ENCODE measurements at regions of chrX and their contacts with region 1.

Region 1: GRCh38 chrX:130268500-130269170 is at the start of gene ZNF280C:
- DNase-seq: peak; percentile 76 to 94 (median 88)
- ATAC-seq: peak; percentile 94
- H3K4me3 ChIP-seq: peak within 1 kb of the TSS; percentile 73 to 74
- H3K4me3 Mint-ChIP-seq: peak within 1 kb of the TSS; percentile 88
- H3K27ac ChIP-seq: peak within 1 kb of the TSS; percentile 54 to 65
- H3K27ac Mint-ChIP-seq: peak within 1 kb of the TSS; percentile 85
- H3K4me1 ChIP-seq: peaks cover 14% of the 10 kb centered on the region
- H3K4me1 Mint-ChIP-seq: peaks cover 13% of the 10 kb centered on the region
- H3K27me3 ChIP-seq: no peaks in the 10 kb centered on the region
- H3K27me3 Mint-ChIP-seq: no peaks in the 10 kb centered on the region
- CTCF ChIP-seq: no peak
- total RNA-seq, gene ZNF280C: 4.4 to 5.2 TPM

Region 2: DNA sequence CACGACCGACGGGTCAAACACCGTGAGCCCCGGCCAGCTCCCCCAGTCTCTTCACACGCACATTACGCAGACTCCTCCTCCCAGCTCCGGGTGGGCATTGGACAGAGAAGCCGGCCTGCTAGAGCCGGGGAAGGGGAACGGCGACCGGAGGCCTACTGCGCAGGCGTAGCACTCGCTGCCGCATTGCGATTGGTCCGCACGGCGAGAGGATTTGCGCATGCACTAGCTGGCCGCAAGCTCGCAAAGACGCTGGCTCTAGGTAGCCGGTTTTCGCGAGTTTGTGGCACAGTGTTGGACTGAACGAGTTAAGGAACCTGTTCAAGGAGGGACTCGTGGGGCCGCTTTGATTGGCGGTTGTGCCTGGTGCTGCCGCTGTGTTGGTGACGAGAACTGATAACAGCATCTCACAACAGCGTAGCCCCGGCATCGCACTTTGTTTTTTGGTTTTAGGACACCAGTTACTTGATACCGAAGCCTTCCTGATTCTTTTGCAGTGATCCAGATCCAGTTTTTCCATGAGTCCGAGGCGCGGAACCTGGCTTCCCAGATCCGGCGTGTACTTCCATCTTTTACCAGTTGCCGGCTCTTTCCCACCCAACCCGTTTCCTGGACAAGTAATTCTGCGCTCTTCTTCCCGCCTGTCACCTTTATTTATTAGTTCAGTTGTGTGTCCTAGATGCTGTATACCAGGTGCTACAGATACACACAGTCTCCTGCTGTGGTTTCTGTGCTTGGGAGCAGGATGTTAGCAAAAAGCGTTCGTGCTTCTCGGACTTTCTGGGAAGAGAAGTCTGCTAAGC is 102.7 kb before region 1 on chrX and contains the start of gene AIFM1:
- CTCF ChIA-PET with region 1: no interaction called
- POLR2A ChIA-PET with region 1: no interaction called
- intact Hi-C with region 1: loop called (anchors 1 to 5 kb)
- DNase-seq: peak; percentile 68 to 95 (median 85)
- ATAC-seq: peak; percentile 87
- H3K4me3 ChIP-seq: peak within 1 kb of the TSS; percentile 57 to 74
- H3K4me3 Mint-ChIP-seq: peak within 1 kb of the TSS; percentile 90
- H3K27ac ChIP-seq: peak within 1 kb of the TSS; percentile 54 to 80
- H3K27ac Mint-ChIP-seq: peak within 1 kb of the TSS; percentile 90
- H3K4me1 ChIP-seq: peaks cover 17% of the 10 kb centered on the region
- H3K4me1 Mint-ChIP-seq: peaks cover 42% of the 10 kb centered on the region
- H3K27me3 ChIP-seq: no peaks in the 10 kb centered on the region
- H3K27me3 Mint-ChIP-seq: no peaks in the 10 kb centered on the region
- CTCF ChIP-seq: no peak
- total RNA-seq, gene AIFM1: 4.4 to 4.9 TPM

Region 3: DNA sequence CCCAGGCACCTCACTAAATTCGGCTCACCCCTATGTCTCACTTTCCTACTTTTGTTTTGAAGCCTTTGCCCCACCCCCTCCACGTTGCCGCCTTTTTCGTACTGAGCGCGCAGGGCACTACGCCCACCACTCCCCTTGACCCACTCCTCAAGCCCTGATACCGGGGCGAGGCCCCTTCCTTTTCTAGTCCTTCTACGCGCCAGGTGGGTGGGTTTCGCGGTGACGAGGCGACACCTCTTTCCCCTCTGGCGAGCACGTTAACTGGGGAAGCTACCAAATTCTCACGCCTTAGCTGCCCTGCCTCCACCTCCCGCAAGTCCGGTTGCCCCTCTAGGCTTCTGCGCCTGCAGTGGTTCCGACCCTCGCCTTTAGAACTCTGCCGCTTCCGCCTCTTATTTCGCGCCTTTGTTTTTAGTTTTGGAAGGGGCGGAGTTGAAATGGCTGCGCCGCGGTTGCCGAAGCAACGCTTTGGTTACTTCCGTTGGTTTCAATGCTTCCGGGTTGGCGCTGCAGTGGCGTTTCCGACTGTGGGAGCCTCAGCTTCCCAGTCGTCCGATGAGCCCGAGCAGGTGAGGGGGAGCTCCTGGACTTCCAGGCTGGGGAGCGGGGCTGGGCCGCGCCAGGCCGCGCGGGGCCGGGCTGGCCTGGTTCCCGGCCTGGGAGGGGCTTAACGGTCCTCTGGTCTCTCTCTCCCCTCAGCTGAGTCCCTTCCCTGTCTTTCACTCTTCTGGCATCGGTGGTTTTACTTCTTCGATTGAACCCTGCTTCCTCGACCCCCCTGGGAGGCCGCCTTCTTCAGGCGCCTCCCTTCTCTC is 71.0 kb after region 1 on chrX and contains the start of gene SLC25A14:
- CTCF ChIA-PET with region 1: no interaction called
- POLR2A ChIA-PET with region 1: interaction called, 5 read pairs
- intact Hi-C with region 1: loop called (anchors 2 kb)
- DNase-seq: peak; percentile 32 to 86 (median 71)
- ATAC-seq: peak; percentile 88
- H3K4me3 ChIP-seq: peak within 1 kb of the TSS; percentile 60 to 83
- H3K4me3 Mint-ChIP-seq: peak within 1 kb of the TSS; percentile 95
- H3K27ac ChIP-seq: peak within 1 kb of the TSS; percentile 36 to 83
- H3K27ac Mint-ChIP-seq: peak within 1 kb of the TSS; percentile 83
- H3K4me1 ChIP-seq: no peaks in the 10 kb centered on the region
- H3K4me1 Mint-ChIP-seq: peaks cover 20% of the 10 kb centered on the region
- H3K27me3 ChIP-seq: no peaks in the 10 kb centered on the region
- H3K27me3 Mint-ChIP-seq: no peaks in the 10 kb centered on the region
- CTCF ChIP-seq: no peak
- total RNA-seq, gene SLC25A14: 11.9 to 13.4 TPM

Region 4: DNA sequence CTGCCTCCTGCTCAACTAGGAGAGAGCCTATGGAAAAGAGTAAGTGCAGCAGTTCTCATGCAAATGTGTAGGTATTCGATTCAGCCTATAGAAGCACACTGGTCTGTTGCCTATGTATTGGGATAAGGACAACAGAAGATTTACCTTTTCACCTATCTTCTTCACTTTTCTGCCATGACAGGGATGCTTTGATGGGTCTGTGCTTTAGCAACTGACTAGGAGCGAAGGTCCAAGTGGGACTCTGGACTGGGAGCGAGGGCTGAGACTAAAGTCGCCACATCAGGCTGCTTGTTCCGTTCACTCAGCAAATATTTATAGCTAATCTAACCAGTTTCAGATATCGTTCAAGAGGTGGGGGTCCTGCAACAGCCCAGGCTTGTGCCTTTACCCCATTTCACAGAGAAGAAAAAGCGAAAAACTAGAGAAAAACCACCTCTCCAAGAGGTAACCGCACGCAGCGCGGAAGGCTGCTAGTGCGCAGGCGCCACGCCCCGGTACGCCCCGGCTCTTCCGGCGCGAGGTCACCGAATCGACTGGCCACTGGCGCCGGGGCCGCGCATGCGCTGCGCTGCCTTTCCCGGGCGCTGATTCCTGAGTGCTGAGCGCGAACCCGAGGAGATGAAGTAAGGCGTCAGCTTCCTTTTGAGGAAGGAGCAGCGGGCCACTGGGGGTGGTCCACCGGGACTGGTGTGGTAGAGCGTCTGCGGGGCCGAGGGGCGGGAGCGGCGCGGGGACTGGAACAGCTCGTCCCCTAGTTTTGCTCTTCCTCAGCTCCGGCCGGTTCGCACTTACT is 133.0 kb after region 1 on chrX and contains the start of gene RBMX2:
- CTCF ChIA-PET with region 1: no interaction called
- POLR2A ChIA-PET with region 1: no interaction called
- intact Hi-C with region 1: loop called (anchors 5 to 10 kb)
- DNase-seq: peak; percentile 37 to 88 (median 68)
- ATAC-seq: peak; percentile 85
- H3K4me3 ChIP-seq: peak within 1 kb of the TSS; percentile 63 to 99
- H3K4me3 Mint-ChIP-seq: peak within 1 kb of the TSS; percentile 87
- H3K27ac ChIP-seq: peak within 1 kb of the TSS; percentile 73 to 76
- H3K27ac Mint-ChIP-seq: peak within 1 kb of the TSS; percentile 91
- H3K4me1 ChIP-seq: peaks cover 12% of the 10 kb centered on the region
- H3K4me1 Mint-ChIP-seq: peaks cover 27% of the 10 kb centered on the region
- H3K27me3 ChIP-seq: no peaks in the 10 kb centered on the region
- H3K27me3 Mint-ChIP-seq: no peaks in the 10 kb centered on the region
- CTCF ChIP-seq: no peak
- total RNA-seq, gene RBMX2: 19.4 to 20.7 TPM

Measured in CD8-positive, alpha-beta T cell (primary cell).